ENCODE measurements at regions of chr21 and their contacts with region 1.

Region 1: GRCh38 chr21:14403681-14404318 is 20.9 kb upstream of the HSPA13 start:
- DNase-seq: peak in 3 of 35 experiments; percentile 10 to 69 (median 11)
- ATAC-seq: peak in 2 of 4 experiments; percentile 55 to 58
- H3K4me3 ChIP-seq: no peak overlapping the region
- H3K4me3 Mint-ChIP-seq: no peak overlapping the region
- H3K27ac ChIP-seq: no peak overlapping the region
- H3K27ac Mint-ChIP-seq: no peak overlapping the region
- H3K4me1 ChIP-seq: no peaks in the 10 kb centered on the region
- H3K4me1 Mint-ChIP-seq: no peaks in the 10 kb centered on the region
- H3K27me3 ChIP-seq: no peaks in the 10 kb centered on the region
- H3K27me3 Mint-ChIP-seq: peaks cover 0 to 4% of the 10 kb centered on the region in 2 donors

Region 2: DNA sequence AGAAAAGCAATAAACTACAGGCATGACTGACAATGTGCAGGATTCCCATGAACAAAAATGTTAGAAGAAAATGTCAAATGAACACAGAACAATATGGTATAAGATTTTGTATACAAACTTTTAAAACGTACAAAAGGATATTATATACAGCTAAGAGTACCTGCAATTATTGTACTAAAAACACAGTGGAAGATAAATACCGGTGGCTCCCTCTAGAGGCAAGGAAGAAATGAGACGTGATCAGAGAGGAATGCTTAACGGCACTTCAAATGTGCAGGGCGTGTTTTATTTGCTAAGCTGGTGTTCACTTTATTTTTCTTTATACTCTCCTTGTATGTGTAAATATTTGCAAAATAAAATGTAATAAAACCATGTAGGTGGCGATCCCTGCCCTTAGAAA is 334.1 kb after region 1 on chr21:
- CTCF ChIA-PET with region 1: interaction called, 4 to 13 read pairs
- POLR2A ChIA-PET with region 1: no interaction called
- DNase-seq: peak in 31 of 35 experiments; percentile 4 to 85 (median 42)
- ATAC-seq: peak; percentile 79 to 91 (median 84)
- H3K4me3 ChIP-seq: no peak overlapping the region
- H3K4me3 Mint-ChIP-seq: no peak overlapping the region
- H3K27ac ChIP-seq: no peak overlapping the region
- H3K27ac Mint-ChIP-seq: no peak overlapping the region
- H3K4me1 ChIP-seq: peaks cover 0 to 2% of the 10 kb centered on the region in 2 experiments
- H3K4me1 Mint-ChIP-seq: peaks cover 14 to 22% (median 20%) of the 10 kb centered on the region in 3 donors
- H3K27me3 ChIP-seq: no peaks in the 10 kb centered on the region
- H3K27me3 Mint-ChIP-seq: no peaks in the 10 kb centered on the region